CD4-positive, alpha-beta memory T cell (primary cell): ENCODE measurements at regions of chr12 and their contacts with region 1.

Region 1: DNA sequence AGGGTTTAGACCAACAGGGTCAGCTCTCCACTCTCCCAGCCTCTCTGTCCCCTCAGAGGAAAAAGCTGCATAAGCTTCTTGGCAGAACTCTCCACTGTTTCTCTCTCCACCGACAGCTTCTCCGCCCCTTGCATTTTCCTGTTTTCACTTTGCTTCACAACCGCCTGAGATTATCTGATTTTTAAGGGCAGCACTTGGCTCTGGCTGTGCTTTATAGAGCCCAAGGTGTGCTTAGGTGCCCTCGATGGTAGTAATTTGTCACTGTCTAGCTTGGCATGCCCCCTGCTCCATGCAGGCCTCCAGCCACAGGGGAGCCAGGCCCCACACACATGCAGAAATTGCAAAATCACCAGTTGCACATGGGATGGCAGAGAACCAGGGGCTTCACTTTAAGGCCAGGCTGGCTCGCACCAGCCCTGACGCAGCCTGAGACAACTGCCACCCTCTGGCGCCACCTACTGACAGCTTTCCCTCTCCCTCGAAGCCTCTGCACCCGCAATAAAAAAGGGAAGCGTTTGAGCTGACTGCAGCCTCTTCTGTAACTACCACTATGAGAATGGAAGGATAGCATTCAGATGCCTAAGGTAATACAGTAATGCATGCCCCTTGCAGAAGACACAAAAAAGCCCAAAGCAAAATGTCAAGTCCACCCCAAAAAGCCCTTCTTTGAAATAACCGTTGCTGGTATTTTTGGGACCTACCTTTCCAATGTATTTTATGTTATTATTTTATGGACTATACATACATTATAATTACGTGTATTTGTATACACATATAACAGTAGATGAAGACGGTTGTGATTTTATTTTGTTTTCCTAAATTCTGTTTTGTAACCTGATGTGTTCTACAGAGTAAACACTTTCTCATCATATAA is 32.0 kb upstream of the RIMBP2 start:
- DNase-seq: peak in 4 of 5 donors; percentile 42 to 55 (median 52)
- H3K4me3 ChIP-seq: no peak overlapping the region
- H3K4me3 Mint-ChIP-seq: peak overlapping the region in 3 of 8 donors; percentile 1 to 38 (median 15)
- H3K27ac ChIP-seq: no peak overlapping the region
- H3K27ac Mint-ChIP-seq: peak overlapping the region in 1 of 7 donors; percentile 12
- H3K4me1 ChIP-seq: peaks cover 4% of the 10 kb centered on the region
- H3K4me1 Mint-ChIP-seq: peaks cover 6 to 9% (median 8%) of the 10 kb centered on the region in 4 donors
- H3K27me3 ChIP-seq: no peaks in the 10 kb centered on the region
- H3K27me3 Mint-ChIP-seq: peaks cover 0 to 5% of the 10 kb centered on the region in 2 donors

Region 2: DNA sequence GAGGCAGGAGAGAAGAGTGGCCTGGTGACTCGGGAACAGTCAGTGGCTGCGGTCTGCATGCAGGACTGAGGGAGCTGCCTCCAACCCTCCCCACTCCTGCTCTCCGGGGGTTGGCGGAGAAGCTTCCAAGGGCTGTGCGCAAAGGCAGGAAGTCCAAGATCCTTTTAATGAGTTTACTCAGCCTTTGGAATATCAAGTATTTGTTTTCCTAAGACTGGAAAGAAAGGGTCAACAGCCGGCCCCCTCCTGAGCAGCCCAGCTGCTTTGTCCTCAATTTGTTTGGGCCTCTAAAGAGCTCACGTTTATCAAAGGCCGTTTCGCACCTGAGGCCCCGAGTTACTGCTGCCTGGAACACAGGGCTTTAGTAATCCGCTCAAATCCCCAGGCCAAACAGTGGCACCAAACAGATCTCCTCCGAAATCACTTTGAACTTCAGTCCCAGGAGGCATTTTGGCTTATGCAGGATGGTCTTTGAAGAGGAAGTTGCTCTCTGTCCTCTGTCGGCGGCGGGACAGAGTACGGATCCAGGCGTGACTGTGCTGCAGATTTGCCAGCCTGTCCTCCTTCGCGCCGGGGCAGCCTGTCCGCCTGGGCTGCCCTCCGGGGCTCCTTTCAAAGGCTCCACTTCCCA is 703.0 kb before region 1 on chr12:
- CTCF ChIA-PET with region 1: no interaction called
- POLR2A ChIA-PET with region 1: no interaction called
- intact Hi-C with region 1: loop called (anchors 5 kb)
- DNase-seq: no peak
- H3K4me3 ChIP-seq: no peak overlapping the region
- H3K4me3 Mint-ChIP-seq: no peak overlapping the region
- H3K27ac ChIP-seq: no peak overlapping the region
- H3K27ac Mint-ChIP-seq: no peak overlapping the region
- H3K4me1 ChIP-seq: no peaks in the 10 kb centered on the region
- H3K4me1 Mint-ChIP-seq: peaks cover 0 to 9% (median 2%) of the 10 kb centered on the region in 4 donors
- H3K27me3 ChIP-seq: no peaks in the 10 kb centered on the region
- H3K27me3 Mint-ChIP-seq: peaks cover 20 to 21% of the 10 kb centered on the region in 2 donors

Region 3: DNA sequence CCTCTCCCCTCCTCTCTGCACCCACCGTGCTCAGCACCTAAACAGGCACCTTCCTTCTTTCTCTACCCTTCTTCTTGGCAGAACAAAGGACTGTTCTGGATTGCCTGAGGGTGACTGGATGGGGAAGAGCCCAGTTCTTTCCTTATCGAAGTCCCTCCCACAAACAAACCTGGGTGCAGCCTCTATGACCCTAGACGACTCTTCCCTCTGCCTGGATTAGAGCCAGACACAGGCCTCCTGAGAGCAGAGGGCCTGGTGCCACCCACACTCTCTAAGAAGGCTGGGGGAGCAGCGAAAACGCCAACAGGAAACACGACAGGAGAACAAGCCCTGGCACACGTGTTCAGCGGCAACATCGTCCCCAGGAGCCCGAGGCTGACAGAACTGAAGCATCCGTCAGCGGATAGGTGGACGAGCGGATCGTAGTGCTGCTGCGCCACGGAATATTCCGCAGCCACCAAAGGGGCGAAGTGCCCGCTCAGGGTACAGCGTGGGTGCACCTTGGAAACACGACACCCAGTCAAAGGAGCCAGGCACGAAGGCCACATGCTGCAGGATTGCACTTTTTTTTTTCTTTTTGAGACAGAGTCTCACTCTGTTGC is 70.0 kb before region 1 on chr12:
- CTCF ChIA-PET with region 1: no interaction called
- POLR2A ChIA-PET with region 1: no interaction called
- intact Hi-C with region 1: no loop called
- DNase-seq: no peak
- H3K4me3 ChIP-seq: no peak overlapping the region
- H3K4me3 Mint-ChIP-seq: no peak overlapping the region
- H3K27ac ChIP-seq: no peak overlapping the region
- H3K27ac Mint-ChIP-seq: no peak overlapping the region
- H3K4me1 ChIP-seq: no peaks in the 10 kb centered on the region
- H3K4me1 Mint-ChIP-seq: no peaks in the 10 kb centered on the region
- H3K27me3 ChIP-seq: no peaks in the 10 kb centered on the region
- H3K27me3 Mint-ChIP-seq: peaks cover 1 to 3% of the 10 kb centered on the region in 2 donors